Endothelial cell of umbilical vein (primary cell): ENCODE measurements at regions of chr13 and their contacts with region 1.

Region 1: DNA sequence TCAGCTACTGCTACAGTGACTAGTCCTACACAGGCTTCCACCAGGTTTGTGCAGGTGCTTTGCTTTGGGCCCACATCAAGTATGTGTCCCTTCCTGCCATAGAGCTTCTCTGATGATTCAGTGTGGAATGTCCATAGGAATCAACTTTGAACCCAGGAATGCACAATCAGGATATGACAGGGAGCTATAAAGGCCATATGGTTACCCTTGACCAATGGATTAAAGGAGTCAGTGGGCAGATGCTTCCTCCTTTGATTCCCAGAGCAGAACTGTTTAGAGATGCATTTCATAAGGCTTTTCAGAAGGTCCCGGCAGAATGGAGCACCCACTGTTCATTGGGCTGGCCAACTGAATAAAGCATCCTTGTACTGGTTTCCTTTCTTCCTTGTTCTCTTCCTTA is 145.2 kb upstream of the WASF3 start:
- DNase-seq: peak; percentile 88
- H3K4me3 ChIP-seq: no peak overlapping the region
- H3K27ac ChIP-seq: peak overlapping the region; percentile 60
- H3K4me1 ChIP-seq: peaks cover 11% of the 10 kb centered on the region
- H3K27me3 ChIP-seq: no peaks in the 10 kb centered on the region
- CTCF ChIP-seq: no peak
- POLR2A ChIP-seq: no peak

Region 2: GRCh38 chr13:26253787-26254582 is 158.3 kb before region 1 on chr13 and contains the start of gene CDK8:
- CTCF ChIA-PET with region 1: no interaction called
- POLR2A ChIA-PET with region 1: no interaction called
- dilution Hi-C with region 1: no loop called
- intact Hi-C with region 1: loop called (anchors 2 kb)
- DNase-seq: peak; percentile 89
- H3K4me3 ChIP-seq: peak within 1 kb of the TSS; percentile 65 to 95 (median 71)
- H3K27ac ChIP-seq: peak within 1 kb of the TSS; percentile 75
- H3K4me1 ChIP-seq: peaks cover 18% of the 10 kb centered on the region
- H3K27me3 ChIP-seq: peaks cover 6 to 15% of the 10 kb centered on the region in 2 experiments
- CTCF ChIP-seq: no peak
- POLR2A ChIP-seq: no peak
- total RNA-seq, gene CDK8: 11.9 and 13.3 TPM in 2 replicates

Region 3: GRCh38 chr13:26476111-26476781 is 64.0 kb after region 1 on chr13:
- CTCF ChIA-PET with region 1: no interaction called
- POLR2A ChIA-PET with region 1: no interaction called
- dilution Hi-C with region 1: no loop called
- intact Hi-C with region 1: loop called (anchors 1 kb)
- DNase-seq: peak; percentile 24
- H3K4me3 ChIP-seq: peak overlapping the region in 1 of 3 experiments; percentile 6
- H3K27ac ChIP-seq: peak overlapping the region; percentile 6
- H3K4me1 ChIP-seq: peaks cover 4% of the 10 kb centered on the region
- H3K27me3 ChIP-seq: no peaks in the 10 kb centered on the region
- CTCF ChIP-seq: no peak
- POLR2A ChIP-seq: no peak

Region 4: GRCh38 chr13:26589754-26590153 is 177.5 kb after region 1 on chr13:
- CTCF ChIA-PET with region 1: no interaction called
- POLR2A ChIA-PET with region 1: no interaction called
- dilution Hi-C with region 1: no loop called
- intact Hi-C with region 1: no loop called
- DNase-seq: peak; percentile 96
- H3K4me3 ChIP-seq: peak overlapping the region in 2 of 3 experiments; percentile 26 to 52
- H3K27ac ChIP-seq: peak overlapping the region; percentile 87
- H3K4me1 ChIP-seq: peaks cover 70% of the 10 kb centered on the region
- H3K27me3 ChIP-seq: no peaks in the 10 kb centered on the region
- CTCF ChIP-seq: no peak
- POLR2A ChIP-seq: no peak